ENCODE measurements at regions of chr19 and their contacts with region 1.

Region 1: GRCh38 chr19:58439576-58440554 is at the start of gene ZNF132:
- H3K4me3 Mint-ChIP-seq: peak within 1 kb of the TSS; percentile 88
- H3K27ac Mint-ChIP-seq: peak within 1 kb of the TSS; percentile 89
- H3K4me1 Mint-ChIP-seq: peaks cover 20% of the 10 kb centered on the region
- H3K27me3 Mint-ChIP-seq: peaks cover 15% of the 10 kb centered on the region

Region 2: DNA sequence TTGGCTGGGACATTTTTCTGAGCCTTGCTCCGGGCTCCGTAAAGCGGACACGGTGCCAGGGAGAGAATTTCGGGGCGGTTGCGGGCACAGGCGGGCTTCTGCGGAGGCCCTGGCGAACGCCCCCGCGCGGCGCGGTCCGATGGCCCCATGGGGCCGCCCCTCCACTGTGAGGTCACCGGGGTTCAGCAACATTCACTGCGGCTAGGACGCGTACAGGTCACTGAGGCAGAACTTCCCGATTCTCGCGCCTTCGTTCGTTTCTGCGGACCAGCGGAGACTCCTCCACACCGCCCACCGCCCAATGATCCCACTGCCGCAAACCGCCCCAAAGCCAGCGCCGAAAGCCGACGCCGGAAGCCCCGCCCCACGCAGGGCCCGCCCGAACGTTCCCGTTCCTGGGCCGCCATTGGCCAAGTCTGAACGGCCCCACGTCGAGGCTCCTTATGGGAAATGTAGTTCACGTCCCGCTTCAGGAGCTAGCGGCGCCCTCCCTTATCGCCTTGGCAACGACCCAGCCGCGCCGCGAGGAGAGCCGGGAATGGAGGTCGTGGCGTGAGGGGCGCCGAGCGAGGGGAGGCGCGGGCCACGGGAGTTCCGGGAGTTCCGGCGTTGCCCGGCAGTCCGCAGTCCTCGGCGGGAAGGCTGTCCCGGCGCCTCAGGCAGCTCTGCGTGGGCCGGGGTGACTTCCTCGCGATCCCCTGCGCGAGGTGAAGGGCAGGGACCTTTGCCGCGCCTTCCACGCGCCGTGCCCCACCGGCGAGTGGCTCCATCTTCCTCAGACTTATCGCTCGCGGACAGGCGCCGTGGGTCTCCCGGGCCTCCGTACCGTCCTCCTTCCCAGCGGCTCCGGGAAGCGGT is 31.5 kb before region 1 on chr19 and contains the start of gene ZNF584:
- intact Hi-C with region 1: loop called (anchors 1 kb)
- H3K4me3 Mint-ChIP-seq: peak within 1 kb of the TSS; percentile 96
- H3K27ac Mint-ChIP-seq: peak within 1 kb of the TSS; percentile 88
- H3K4me1 Mint-ChIP-seq: peaks cover 40% of the 10 kb centered on the region
- H3K27me3 Mint-ChIP-seq: no peaks in the 10 kb centered on the region

Region 3: GRCh38 chr19:58451358-58452101 is 11.7 kb after region 1 on chr19 and contains the start of gene ZNF324B:
- intact Hi-C with region 1: loop called (anchors 1 kb)
- H3K4me3 Mint-ChIP-seq: peak within 1 kb of the TSS; percentile 85
- H3K27ac Mint-ChIP-seq: peak within 1 kb of the TSS; percentile 77
- H3K4me1 Mint-ChIP-seq: peaks cover 28% of the 10 kb centered on the region
- H3K27me3 Mint-ChIP-seq: peaks cover 19% of the 10 kb centered on the region

Region 4: DNA sequence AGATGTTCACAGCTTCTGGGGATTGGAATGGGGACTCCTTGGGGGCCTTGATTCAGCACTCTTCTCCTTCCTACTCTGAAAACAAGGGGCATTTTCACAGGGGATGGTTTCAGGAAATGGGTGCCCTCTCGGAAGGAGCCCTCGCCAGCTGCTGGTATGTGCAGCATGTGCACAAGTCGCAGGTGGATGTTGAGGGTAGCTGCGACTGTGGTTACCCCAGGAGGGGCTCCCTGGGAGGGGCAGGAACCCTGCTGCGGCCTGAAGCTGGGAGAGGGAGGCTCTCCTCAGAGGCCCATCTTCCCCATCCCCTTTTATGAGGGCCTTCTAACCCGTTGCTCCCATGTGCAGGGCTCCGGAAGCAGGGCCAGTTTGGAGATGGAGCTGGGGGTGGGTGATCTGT is 42.5 kb after region 1 on chr19:
- intact Hi-C with region 1: no loop called
- H3K4me3 Mint-ChIP-seq: no peak overlapping the region
- H3K27ac Mint-ChIP-seq: no peak overlapping the region
- H3K4me1 Mint-ChIP-seq: peaks cover 4% of the 10 kb centered on the region
- H3K27me3 Mint-ChIP-seq: no peaks in the 10 kb centered on the region

Region 5: GRCh38 chr19:58572818-58573657 is 133.2 kb after region 1 on chr19 and contains the start of gene MZF1:
- intact Hi-C with region 1: no loop called
- H3K4me3 Mint-ChIP-seq: peak within 1 kb of the TSS; percentile 85
- H3K27ac Mint-ChIP-seq: peak within 1 kb of the TSS; percentile 98
- H3K4me1 Mint-ChIP-seq: peaks cover 47% of the 10 kb centered on the region
- H3K27me3 Mint-ChIP-seq: no peaks in the 10 kb centered on the region

Measured in dendritic cell treated with granulocyte-macrophage colony-stimulating factor and Interleukin-4, amounts not matched to agents 40 ng/mL and 50 ng/mL, for 4 days (primary cell).